ENCODE measurements at regions of chr19 and their contacts with region 1.

Region 1: GRCh38 chr19:58380722-58381466 is at the start of gene ZNF837:
- DNase-seq: peak; percentile 89 to 100 (median 94)
- ATAC-seq: peak; percentile 93
- H3K4me3 ChIP-seq: peak within 1 kb of the TSS; percentile 61
- H3K27ac ChIP-seq: peak within 1 kb of the TSS; percentile 88
- H3K4me1 ChIP-seq: peaks cover 20 to 47% of the 10 kb centered on the region in 2 experiments
- H3K27me3 ChIP-seq: no peaks in the 10 kb centered on the region
- CTCF ChIP-seq: no peak
- EP300 ChIP-seq: no peak
- POLR2A ChIP-seq: peak; percentile 96
- RAD21 ChIP-seq: peak in 1 of 2 experiments; percentile 31; a peak in 2 of 4 replicates
- polyA plus RNA-seq, gene ZNF837: not detected

Region 2: DNA sequence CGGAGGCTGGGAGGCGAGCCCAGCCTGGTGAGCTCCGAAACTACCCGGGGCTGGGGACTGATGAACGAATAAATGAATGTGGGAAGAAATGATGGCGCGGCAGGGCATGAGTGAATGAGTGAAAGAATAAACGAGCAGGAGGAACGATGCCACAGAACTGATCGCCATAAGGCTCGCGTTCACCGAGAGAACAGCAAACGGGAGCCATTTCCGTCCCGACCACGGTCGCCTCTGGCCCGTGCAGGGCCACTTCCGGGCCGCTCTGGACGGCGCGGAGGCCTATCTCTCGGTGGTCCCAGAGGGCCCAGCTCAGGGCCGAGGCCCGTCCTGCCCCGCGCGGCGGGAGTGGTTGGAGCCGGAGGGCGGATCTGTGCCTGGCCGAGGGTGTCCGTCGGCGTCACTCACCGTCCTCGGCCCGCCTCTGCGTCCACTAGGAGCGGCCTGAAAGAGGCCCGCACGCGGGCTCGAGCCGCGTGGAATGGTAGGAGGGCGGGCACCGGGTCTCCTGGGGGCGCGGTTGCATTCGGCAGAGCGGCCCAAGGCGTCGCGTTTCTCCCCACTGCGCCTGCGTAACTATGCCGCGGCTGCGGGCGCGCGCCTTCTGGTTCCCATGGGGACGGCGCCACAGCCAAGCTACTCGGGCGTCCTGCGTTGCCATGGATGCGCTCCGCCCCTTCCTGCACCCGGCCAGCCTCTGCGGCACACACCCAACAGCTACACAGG is 18.5 kb before region 1 on chr19 and contains the start of gene ZNF497:
- CTCF ChIA-PET with region 1: no interaction called
- POLR2A ChIA-PET with region 1: interaction called, 13 read pairs
- in situ Hi-C with region 1: no loop called
- intact Hi-C with region 1: loop called (anchors 2 kb)
- DNase-seq: peak; percentile 98
- ATAC-seq: peak; percentile 98
- H3K4me3 ChIP-seq: peak within 1 kb of the TSS; percentile 65
- H3K27ac ChIP-seq: peak within 1 kb of the TSS; percentile 97
- H3K4me1 ChIP-seq: peaks cover 7 to 38% of the 10 kb centered on the region in 2 experiments; a peak in 3 of 5 replicates
- H3K27me3 ChIP-seq: no peaks in the 10 kb centered on the region
- CTCF ChIP-seq: no peak
- EP300 ChIP-seq: no peak
- POLR2A ChIP-seq: peak; percentile 95
- RAD21 ChIP-seq: no peak; a peak in 1 of 4 replicates
- polyA plus RNA-seq, gene ZNF497: 0.06 TPM in 1 of 2 experiments, not detected in the other

Measured in K562 (cell line).